ENCODE measurements at regions of chr1 and their contacts with region 1.

Region 1: GRCh38 chr1:80722611-80723010 is 1078.1 kb upstream of the ADGRL2 start:
- DNase-seq: no peak
- H3K4me3 ChIP-seq: no peak overlapping the region
- CTCF ChIP-seq: no peak
- POLR2A ChIP-seq: no peak

Region 2: GRCh38 chr1:80472145-80472544 is 250.5 kb before region 1 on chr1:
- intact Hi-C with region 1: loop called (anchors 10 kb)
- DNase-seq: no peak
- H3K4me3 ChIP-seq: no peak overlapping the region
- CTCF ChIP-seq: no peak
- POLR2A ChIP-seq: no peak

Region 3: DNA sequence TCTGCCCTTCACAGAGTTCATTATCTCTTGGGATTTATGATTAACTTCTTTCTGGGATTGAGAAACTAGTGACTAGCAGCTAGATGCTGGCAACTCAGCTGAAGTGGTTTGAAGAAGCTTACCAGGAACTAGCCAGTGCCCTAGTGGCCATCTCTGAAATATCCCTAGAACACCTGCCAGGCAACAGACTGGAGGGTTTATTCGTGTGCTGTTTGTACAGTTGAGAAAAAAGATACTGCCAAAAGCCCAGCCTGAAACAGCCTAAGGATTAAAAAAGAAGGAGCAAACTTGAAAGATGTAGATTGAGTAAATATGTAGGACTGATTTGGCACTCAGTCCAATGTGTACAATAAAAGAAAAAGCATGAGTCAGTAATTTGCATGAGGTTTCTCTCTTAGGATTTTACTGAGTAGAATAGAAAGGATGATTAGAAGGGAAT is 66.5 kb before region 1 on chr1:
- intact Hi-C with region 1: no loop called
- DNase-seq: no peak
- H3K4me3 ChIP-seq: no peak overlapping the region
- CTCF ChIP-seq: no peak
- POLR2A ChIP-seq: no peak

Region 4: DNA sequence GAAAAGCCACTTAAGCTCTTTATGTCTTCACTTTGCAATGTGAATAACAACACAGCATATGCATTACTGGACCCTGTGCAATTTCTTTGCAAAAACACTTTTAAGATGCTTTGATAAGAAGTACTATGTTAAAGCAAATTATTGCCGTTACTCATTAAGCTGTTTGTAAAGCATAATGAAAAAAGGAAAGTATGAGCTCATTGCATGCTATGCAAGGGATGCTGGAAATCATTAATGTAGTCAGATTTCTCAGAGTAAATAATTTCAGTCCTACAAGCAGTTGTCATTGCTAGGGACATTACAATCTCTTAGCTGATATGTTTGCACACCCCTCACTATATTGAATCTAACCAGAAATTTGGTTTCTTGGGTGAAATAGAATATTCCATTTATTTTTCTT is 95.6 kb after region 1 on chr1:
- intact Hi-C with region 1: no loop called
- DNase-seq: no peak
- H3K4me3 ChIP-seq: no peak overlapping the region
- CTCF ChIP-seq: no peak
- POLR2A ChIP-seq: no peak

Region 5: DNA sequence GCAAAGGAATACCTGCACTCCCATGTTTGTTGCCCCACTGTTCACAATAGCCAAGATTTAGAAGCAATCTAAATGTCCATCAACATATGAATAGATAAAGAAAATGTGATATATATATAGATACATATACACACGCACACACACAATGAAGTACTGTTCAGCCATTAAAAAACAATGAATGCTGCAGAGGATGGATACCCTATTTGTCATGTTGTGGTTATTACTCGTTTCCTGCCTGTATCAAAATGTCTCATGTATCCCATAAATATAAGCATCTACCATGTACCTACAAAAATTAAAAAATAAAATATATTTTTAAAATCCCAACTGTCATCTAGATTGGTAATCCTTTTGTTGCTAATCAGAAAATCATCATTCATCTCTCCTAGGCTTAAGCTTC is 443.4 kb after region 1 on chr1:
- intact Hi-C with region 1: no loop called
- DNase-seq: no peak
- H3K4me3 ChIP-seq: no peak overlapping the region
- CTCF ChIP-seq: no peak
- POLR2A ChIP-seq: no peak

Measured in lower leg skin (tissue), 4 donors.